PC-3 (cell line): ENCODE measurements at regions of chr4 and their contacts with region 1.

Region 1: GRCh38 chr4:80215449-80216052 is 18.2 kb downstream of the PRDM8 start:
- DNase-seq: peak; percentile 50
- ATAC-seq: no peak
- H3K4me3 ChIP-seq: no peak overlapping the region
- H3K27ac ChIP-seq: no peak overlapping the region
- H3K4me1 ChIP-seq: peaks cover 20% of the 10 kb centered on the region
- H3K27me3 ChIP-seq: no peaks in the 10 kb centered on the region
- CTCF ChIP-seq: peak; percentile 68

Region 2: GRCh38 chr4:79042079-79042674 is 1173.4 kb before region 1 on chr4:
- CTCF ChIA-PET with region 1: no interaction called
- POLR2A ChIA-PET with region 1: no interaction called
- intact Hi-C with region 1: loop called (anchors 10 kb)
- DNase-seq: peak; percentile 47
- ATAC-seq: peak; percentile 35; the same call in 1 of the 2 replicates
- H3K4me3 ChIP-seq: no peak overlapping the region
- H3K27ac ChIP-seq: no peak overlapping the region
- H3K4me1 ChIP-seq: no peaks in the 10 kb centered on the region
- H3K27me3 ChIP-seq: no peaks in the 10 kb centered on the region
- CTCF ChIP-seq: peak; percentile 66

Region 3: DNA sequence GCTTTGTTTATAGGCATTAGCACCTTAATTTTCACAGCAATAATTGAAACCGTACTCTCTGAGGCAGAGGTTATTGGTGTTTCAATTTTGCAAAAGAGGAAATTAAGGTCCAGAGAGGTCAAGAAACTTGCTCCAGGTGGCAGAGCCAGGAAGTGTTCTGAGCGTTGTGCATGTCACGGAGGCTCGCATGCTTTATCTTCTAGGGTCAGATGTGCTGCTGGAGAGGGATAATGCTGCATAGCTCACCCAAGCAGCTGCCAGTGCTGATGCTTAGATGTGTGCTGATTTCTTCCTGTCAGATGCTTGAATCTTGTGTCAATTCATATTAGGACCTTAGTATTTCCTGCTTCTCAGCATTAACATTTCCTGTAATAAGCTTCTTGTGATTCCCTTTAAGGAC is 38.0 kb after region 1 on chr4:
- CTCF ChIA-PET with region 1: no interaction called
- POLR2A ChIA-PET with region 1: no interaction called
- intact Hi-C with region 1: no loop called
- DNase-seq: no peak
- ATAC-seq: no peak
- H3K4me3 ChIP-seq: no peak overlapping the region
- H3K27ac ChIP-seq: no peak overlapping the region
- H3K4me1 ChIP-seq: peaks cover 16% of the 10 kb centered on the region
- H3K27me3 ChIP-seq: no peaks in the 10 kb centered on the region
- CTCF ChIP-seq: no peak

Region 4: DNA sequence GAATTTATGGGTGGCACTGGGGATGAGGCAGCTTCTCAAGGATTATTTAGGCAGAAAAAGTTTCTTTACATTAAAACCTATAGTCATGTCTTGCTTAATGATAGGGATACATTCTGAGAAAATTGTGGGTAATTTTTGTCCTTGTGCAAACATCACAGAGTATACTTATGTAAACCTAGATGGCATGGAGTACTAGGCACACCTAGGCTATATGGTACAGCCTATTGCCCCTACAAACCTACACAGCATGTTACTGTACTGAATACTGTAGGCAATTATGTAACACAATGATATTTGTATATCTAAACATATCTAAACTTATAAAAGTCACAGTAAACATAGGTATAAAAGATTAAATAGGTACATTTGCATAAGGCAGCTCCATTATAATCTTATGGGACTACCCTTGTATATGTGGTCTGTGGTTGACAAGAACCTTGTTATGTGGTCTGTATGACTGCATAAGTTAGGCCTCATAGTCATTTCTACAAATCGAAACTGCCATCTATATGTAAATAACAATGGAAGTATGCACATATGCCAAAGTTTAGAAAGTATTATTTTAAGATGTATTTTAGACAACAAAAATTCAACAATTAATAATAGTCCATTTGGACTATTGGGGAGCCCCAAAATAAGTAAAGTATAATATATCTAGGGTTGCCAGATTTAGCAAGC is 207.3 kb after region 1 on chr4:
- CTCF ChIA-PET with region 1: no interaction called
- POLR2A ChIA-PET with region 1: no interaction called
- intact Hi-C with region 1: no loop called
- DNase-seq: peak; percentile 6
- ATAC-seq: peak; percentile 24; the same call in 1 of the 2 replicates
- H3K4me3 ChIP-seq: no peak overlapping the region
- H3K27ac ChIP-seq: no peak overlapping the region
- H3K4me1 ChIP-seq: peaks cover 6% of the 10 kb centered on the region; the same call in 1 of the 2 replicates
- H3K27me3 ChIP-seq: no peaks in the 10 kb centered on the region
- CTCF ChIP-seq: no peak